Endothelial cell of umbilical vein (primary cell): ENCODE measurements at regions of chr1 and their contacts with region 1.

Region 1: GRCh38 chr1:91282695-91283420 is 121.8 kb downstream of the HFM1 start:
- DNase-seq: peak; percentile 69
- H3K4me3 ChIP-seq: no peak overlapping the region
- H3K27ac ChIP-seq: no peak overlapping the region
- H3K4me1 ChIP-seq: no peaks in the 10 kb centered on the region
- H3K27me3 ChIP-seq: peaks cover 5 to 7% of the 10 kb centered on the region in 2 experiments
- CTCF ChIP-seq: peak; percentile 64 to 66
- POLR2A ChIP-seq: no peak

Region 2: GRCh38 chr1:90114521-90115141 is 1168.2 kb before region 1 on chr1:
- CTCF ChIA-PET with region 1: interaction called, 9 read pairs
- POLR2A ChIA-PET with region 1: no interaction called
- dilution Hi-C with region 1: no loop called
- intact Hi-C with region 1: loop called (anchors 10 kb)
- DNase-seq: peak; percentile 59
- H3K4me3 ChIP-seq: no peak overlapping the region
- H3K27ac ChIP-seq: no peak overlapping the region
- H3K4me1 ChIP-seq: no peaks in the 10 kb centered on the region
- H3K27me3 ChIP-seq: peaks cover 7 to 9% of the 10 kb centered on the region in 2 experiments
- CTCF ChIP-seq: peak; percentile 34 to 52
- POLR2A ChIP-seq: no peak

Region 3: DNA sequence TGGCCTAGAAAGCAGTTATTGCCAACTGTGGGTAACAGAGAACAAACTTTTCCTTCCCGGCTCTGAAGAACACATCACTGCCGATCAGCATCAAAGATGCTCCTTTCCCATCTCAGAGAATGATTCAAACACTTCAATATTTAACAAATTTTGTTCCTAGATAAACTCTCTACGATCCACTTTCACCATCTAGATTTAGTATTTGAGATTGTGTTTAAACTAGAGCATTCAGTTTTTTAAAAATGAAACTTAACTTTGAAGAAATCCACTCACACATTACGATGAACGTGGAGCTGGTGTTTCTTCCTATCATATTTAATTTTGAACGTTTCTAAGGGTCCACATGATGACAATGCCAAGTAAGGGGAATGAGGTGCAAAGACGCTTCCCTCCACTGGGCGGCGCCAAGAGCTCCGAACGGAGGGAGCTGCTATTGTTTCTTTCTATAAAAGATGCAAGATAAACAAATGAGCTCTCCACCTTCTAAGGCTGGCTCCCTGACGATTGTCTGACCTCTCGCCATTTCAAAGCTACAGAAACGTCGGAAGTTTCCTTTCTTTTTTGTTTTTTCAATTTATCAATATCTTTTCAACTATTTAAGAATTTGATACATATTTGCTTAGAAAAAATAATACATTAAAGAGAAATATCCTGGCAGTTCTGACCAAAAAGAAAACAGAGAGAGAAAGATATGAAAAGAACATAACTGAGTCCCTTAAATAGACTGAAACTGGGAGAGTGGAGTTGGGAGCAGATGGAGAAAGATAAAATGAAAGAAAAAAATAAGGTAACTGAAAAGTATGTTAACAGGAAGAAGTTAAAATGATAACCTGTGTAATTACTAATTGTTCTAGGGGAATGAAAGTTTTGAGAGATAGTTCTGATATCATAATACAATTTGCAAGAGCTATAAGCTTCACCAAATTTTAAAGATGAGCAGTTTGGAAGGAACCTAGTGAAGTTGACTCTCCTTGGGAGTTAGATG is 561.4 kb before region 1 on chr1:
- CTCF ChIA-PET with region 1: interaction called, 17 read pairs
- POLR2A ChIA-PET with region 1: no interaction called
- dilution Hi-C with region 1: no loop called
- intact Hi-C with region 1: loop called (anchors 5 kb)
- DNase-seq: peak; percentile 75
- H3K4me3 ChIP-seq: no peak overlapping the region
- H3K27ac ChIP-seq: no peak overlapping the region
- H3K4me1 ChIP-seq: peaks cover 2% of the 10 kb centered on the region
- H3K27me3 ChIP-seq: peaks cover 85 to 97% of the 10 kb centered on the region in 2 experiments
- CTCF ChIP-seq: peak; percentile 87 to 96
- POLR2A ChIP-seq: no peak

Region 4: GRCh38 chr1:91404151-91405012 is 121.5 kb after region 1 on chr1 and contains the start of gene HFM1:
- CTCF ChIA-PET with region 1: interaction called, 3 read pairs
- POLR2A ChIA-PET with region 1: no interaction called
- dilution Hi-C with region 1: no loop called
- intact Hi-C with region 1: loop called (anchors 1 kb)
- DNase-seq: peak; percentile 58
- H3K4me3 ChIP-seq: peak within 1 kb of the TSS; percentile 57 to 74 (median 71)
- H3K27ac ChIP-seq: no peak within 1 kb of the TSS
- H3K4me1 ChIP-seq: peaks cover 3% of the 10 kb centered on the region
- H3K27me3 ChIP-seq: peaks cover 4 to 13% of the 10 kb centered on the region in 2 experiments
- CTCF ChIP-seq: no peak
- POLR2A ChIP-seq: no peak
- total RNA-seq, gene HFM1: 0.11 and 0.72 TPM in 2 replicates

Region 5: GRCh38 chr1:91684481-91685196 is 401.8 kb after region 1 on chr1:
- CTCF ChIA-PET with region 1: no interaction called
- POLR2A ChIA-PET with region 1: no interaction called
- dilution Hi-C with region 1: no loop called
- intact Hi-C with region 1: no loop called
- DNase-seq: peak; percentile 66
- H3K4me3 ChIP-seq: no peak overlapping the region
- H3K27ac ChIP-seq: no peak overlapping the region
- H3K4me1 ChIP-seq: peaks cover 33% of the 10 kb centered on the region
- H3K27me3 ChIP-seq: no peaks in the 10 kb centered on the region
- CTCF ChIP-seq: no peak
- POLR2A ChIP-seq: no peak

Region 6: DNA sequence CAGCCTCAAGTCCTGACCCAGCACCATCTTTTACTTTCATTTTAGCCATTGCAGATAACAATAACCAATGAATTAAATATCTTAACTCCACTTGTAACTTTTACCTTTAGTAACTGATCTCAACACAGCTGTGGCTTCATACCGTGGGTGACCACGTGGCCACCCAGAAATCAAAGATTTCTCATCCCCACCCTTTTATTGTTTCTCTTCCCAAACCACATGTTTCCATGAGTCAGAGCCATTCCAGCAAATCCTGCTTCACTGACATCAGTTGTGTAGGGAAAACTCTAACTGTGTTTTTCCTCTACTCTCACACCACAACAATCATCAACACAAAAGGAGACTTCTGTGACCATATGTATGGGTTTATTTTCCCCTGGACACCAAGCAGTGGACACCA is 641.3 kb after region 1 on chr1:
- CTCF ChIA-PET with region 1: interaction called, 7 read pairs
- POLR2A ChIA-PET with region 1: no interaction called
- dilution Hi-C with region 1: no loop called
- intact Hi-C with region 1: loop called (anchors 1 kb)
- DNase-seq: peak; percentile 37
- H3K4me3 ChIP-seq: no peak overlapping the region
- H3K27ac ChIP-seq: no peak overlapping the region
- H3K4me1 ChIP-seq: peaks cover 2% of the 10 kb centered on the region
- H3K27me3 ChIP-seq: no peaks in the 10 kb centered on the region
- CTCF ChIP-seq: no peak
- POLR2A ChIP-seq: no peak